H1 (cell line): ENCODE measurements at regions of chr15 and their contacts with region 1.

Region 1: GRCh38 chr15:65856821-65857455 is 12.4 kb upstream of the RAB11A start:
- DNase-seq: peak in 1 of 2 experiments; percentile 83
- H3K4me3 ChIP-seq: no peak overlapping the region
- H3K27ac ChIP-seq: no peak overlapping the region
- H3K4me1 ChIP-seq: no peaks in the 10 kb centered on the region
- H3K27me3 ChIP-seq: no peaks in the 10 kb centered on the region
- CTCF ChIP-seq: peak; percentile 72 to 90 (median 89)
- EP300 ChIP-seq: no peak
- POLR2A ChIP-seq: no peak
- RAD21 ChIP-seq: peak; percentile 48 to 57

Region 2: GRCh38 chr15:65777053-65777452 is 79.9 kb before region 1 on chr15:
- CTCF ChIA-PET with region 1: no interaction called
- POLR2A ChIA-PET with region 1: no interaction called
- DNase-seq: no peak
- H3K4me3 ChIP-seq: no peak overlapping the region
- H3K27ac ChIP-seq: no peak overlapping the region
- H3K4me1 ChIP-seq: no peaks in the 10 kb centered on the region
- H3K27me3 ChIP-seq: no peaks in the 10 kb centered on the region
- CTCF ChIP-seq: no peak
- EP300 ChIP-seq: no peak
- POLR2A ChIP-seq: no peak
- RAD21 ChIP-seq: no peak

Region 3: GRCh38 chr15:65832549-65833364 is 24.2 kb before region 1 on chr15:
- CTCF ChIA-PET with region 1: interaction called, 35 read pairs
- POLR2A ChIA-PET with region 1: no interaction called
- DNase-seq: peak; percentile 74 to 78
- H3K4me3 ChIP-seq: peak overlapping the region in 1 of 4 experiments; percentile 40; a peak in 2 of 8 replicates
- H3K27ac ChIP-seq: peak overlapping the region; percentile 78
- H3K4me1 ChIP-seq: peaks cover 4 to 23% (median 7%) of the 10 kb centered on the region in 4 experiments; a peak in 6 of 7 replicates
- H3K27me3 ChIP-seq: no peaks in the 10 kb centered on the region
- CTCF ChIP-seq: peak in 1 of 3 experiments; percentile 14; a peak in 1 of 4 replicates
- EP300 ChIP-seq: peak in 1 of 2 experiments; percentile 68; a peak in 1 of 3 replicates
- POLR2A ChIP-seq: peak; percentile 18 to 61
- RAD21 ChIP-seq: peak in 1 of 2 experiments; percentile 20; a peak in 1 of 4 replicates

Region 4: GRCh38 chr15:65841121-65841925 is 15.6 kb before region 1 on chr15:
- CTCF ChIA-PET with region 1: interaction called, 35 read pairs
- POLR2A ChIA-PET with region 1: no interaction called
- DNase-seq: no peak
- H3K4me3 ChIP-seq: no peak overlapping the region
- H3K27ac ChIP-seq: no peak overlapping the region
- H3K4me1 ChIP-seq: no peaks in the 10 kb centered on the region
- H3K27me3 ChIP-seq: no peaks in the 10 kb centered on the region
- CTCF ChIP-seq: no peak
- EP300 ChIP-seq: no peak
- POLR2A ChIP-seq: no peak
- RAD21 ChIP-seq: no peak

Region 5: GRCh38 chr15:65869127-65869953 is 12.4 kb after region 1 on chr15 and contains the start of gene RAB11A:
- CTCF ChIA-PET with region 1: interaction called, 40 read pairs
- POLR2A ChIA-PET with region 1: interaction called, 7 read pairs
- DNase-seq: peak; percentile 90 to 97
- H3K4me3 ChIP-seq: peak within 1 kb of the TSS; percentile 85 to 99 (median 92)
- H3K27ac ChIP-seq: peak within 1 kb of the TSS; percentile 92
- H3K4me1 ChIP-seq: peaks cover 0 to 2% (median 0%) of the 10 kb centered on the region in 4 experiments; a peak in 2 of 7 replicates
- H3K27me3 ChIP-seq: no peaks in the 10 kb centered on the region
- CTCF ChIP-seq: peak; percentile 28 to 31 (median 30); a peak in 3 of 4 replicates
- EP300 ChIP-seq: no peak
- POLR2A ChIP-seq: peak; percentile 95 to 99
- RAD21 ChIP-seq: peak; percentile 16 to 17; a peak in 1 of 4 replicates
- total RNA-seq, gene RAB11A: 247 and 254 TPM in 2 replicates

Region 6: DNA sequence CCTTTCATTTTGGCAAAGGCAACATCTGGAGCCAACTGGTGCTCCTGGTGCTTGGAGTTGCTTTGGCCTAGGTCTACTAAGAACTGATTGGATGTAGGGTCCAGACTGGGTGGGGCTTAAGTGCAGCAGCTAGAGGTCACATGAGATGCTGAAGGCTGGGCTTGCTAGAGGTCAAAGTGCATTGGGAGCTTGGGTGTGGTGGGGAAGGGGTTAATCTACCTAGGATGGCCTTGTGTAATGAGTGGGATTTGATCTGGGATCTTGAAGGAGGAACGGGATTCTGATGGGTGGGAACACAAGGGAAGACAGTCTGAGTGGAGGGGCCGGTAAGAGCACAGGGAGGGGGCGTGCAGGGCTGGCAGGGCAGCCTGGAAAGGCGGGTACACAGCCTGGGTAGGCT is 137.9 kb after region 1 on chr15:
- CTCF ChIA-PET with region 1: no interaction called
- POLR2A ChIA-PET with region 1: no interaction called
- DNase-seq: no peak
- H3K4me3 ChIP-seq: no peak overlapping the region
- H3K27ac ChIP-seq: no peak overlapping the region
- H3K4me1 ChIP-seq: peaks cover 0 to 19% (median 5%) of the 10 kb centered on the region in 4 experiments; a peak in 5 of 7 replicates
- H3K27me3 ChIP-seq: no peaks in the 10 kb centered on the region
- CTCF ChIP-seq: no peak
- EP300 ChIP-seq: no peak
- POLR2A ChIP-seq: no peak
- RAD21 ChIP-seq: no peak